CD4-positive, alpha-beta memory T cell (primary cell): ENCODE measurements at regions of chr2 and their contacts with region 1.

Region 1: GRCh38 chr2:238784671-238785527 is 63.0 kb upstream of the TWIST2 start:
- DNase-seq: peak; percentile 34 to 45 (median 39)
- H3K4me3 ChIP-seq: no peak overlapping the region
- H3K4me3 Mint-ChIP-seq: no peak overlapping the region
- H3K27ac ChIP-seq: no peak overlapping the region
- H3K27ac Mint-ChIP-seq: no peak overlapping the region
- H3K4me1 ChIP-seq: no peaks in the 10 kb centered on the region
- H3K4me1 Mint-ChIP-seq: peaks cover 2 to 5% (median 4%) of the 10 kb centered on the region in 4 donors
- H3K27me3 ChIP-seq: no peaks in the 10 kb centered on the region
- H3K27me3 Mint-ChIP-seq: peaks cover 5 to 7% of the 10 kb centered on the region in 2 donors

Region 2: GRCh38 chr2:238362626-238363025 is 422.3 kb before region 1 on chr2:
- CTCF ChIA-PET with region 1: interaction called, 6 read pairs
- POLR2A ChIA-PET with region 1: no interaction called
- intact Hi-C with region 1: loop called (anchors 5 kb)
- DNase-seq: no peak
- H3K4me3 ChIP-seq: no peak overlapping the region
- H3K4me3 Mint-ChIP-seq: no peak overlapping the region
- H3K27ac ChIP-seq: no peak overlapping the region
- H3K27ac Mint-ChIP-seq: no peak overlapping the region
- H3K4me1 ChIP-seq: no peaks in the 10 kb centered on the region
- H3K4me1 Mint-ChIP-seq: no peaks in the 10 kb centered on the region
- H3K27me3 ChIP-seq: no peaks in the 10 kb centered on the region
- H3K27me3 Mint-ChIP-seq: no peaks in the 10 kb centered on the region

Region 3: DNA sequence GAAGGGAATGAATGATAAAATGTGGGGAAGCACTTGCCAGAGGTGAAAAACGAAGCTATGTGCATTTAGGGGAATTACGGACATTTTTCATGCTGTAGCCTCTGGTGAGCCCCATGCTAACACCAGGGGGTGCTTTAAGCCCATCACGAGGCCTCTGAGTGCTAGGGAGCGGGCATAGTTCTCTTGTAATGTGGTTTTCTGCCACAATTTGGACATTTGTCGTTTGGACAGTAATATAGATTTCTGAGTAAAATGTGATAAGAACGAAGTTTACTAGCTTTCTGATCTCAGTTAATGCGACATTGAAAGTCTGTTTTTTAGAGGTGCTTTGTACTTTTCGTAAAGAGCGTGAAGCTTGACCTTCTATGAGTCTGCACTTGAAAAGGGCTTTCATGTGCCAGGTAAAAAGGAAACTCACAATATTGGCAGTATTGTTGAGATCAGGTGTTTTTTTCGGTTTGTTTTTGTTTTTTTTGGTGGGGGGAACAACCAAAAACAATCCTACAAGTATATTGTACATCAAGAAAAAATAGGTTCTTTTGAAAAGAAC is 414.0 kb before region 1 on chr2:
- CTCF ChIA-PET with region 1: interaction called, 19 read pairs
- POLR2A ChIA-PET with region 1: no interaction called
- intact Hi-C with region 1: no loop called
- DNase-seq: peak; percentile 36 to 50 (median 39)
- H3K4me3 ChIP-seq: no peak overlapping the region
- H3K4me3 Mint-ChIP-seq: peak overlapping the region in 1 of 8 donors; percentile 18
- H3K27ac ChIP-seq: no peak overlapping the region
- H3K27ac Mint-ChIP-seq: no peak overlapping the region
- H3K4me1 ChIP-seq: no peaks in the 10 kb centered on the region
- H3K4me1 Mint-ChIP-seq: peaks cover 0 to 4% (median 3%) of the 10 kb centered on the region in 4 donors
- H3K27me3 ChIP-seq: no peaks in the 10 kb centered on the region
- H3K27me3 Mint-ChIP-seq: no peaks in the 10 kb centered on the region

Region 4: GRCh38 chr2:238864207-238865014 is 79.5 kb after region 1 on chr2:
- CTCF ChIA-PET with region 1: no interaction called
- POLR2A ChIA-PET with region 1: no interaction called
- intact Hi-C with region 1: no loop called
- DNase-seq: no peak
- H3K4me3 ChIP-seq: no peak overlapping the region
- H3K4me3 Mint-ChIP-seq: no peak overlapping the region
- H3K27ac ChIP-seq: no peak overlapping the region
- H3K27ac Mint-ChIP-seq: no peak overlapping the region
- H3K4me1 ChIP-seq: no peaks in the 10 kb centered on the region
- H3K4me1 Mint-ChIP-seq: no peaks in the 10 kb centered on the region
- H3K27me3 ChIP-seq: no peaks in the 10 kb centered on the region
- H3K27me3 Mint-ChIP-seq: peaks cover 3 to 7% of the 10 kb centered on the region in 2 donors